Sciatic nerve (tissue), 2 donors: ENCODE measurements at regions of chr11 and their contacts with region 1.

Region 1: GRCh38 chr11:108241330-108242037 is 18.6 kb downstream of the ATM start:
- DNase-seq: no peak
- ATAC-seq: no peak

Region 2: GRCh38 chr11:109251230-109251629 is 1009.7 kb after region 1 on chr11:
- intact Hi-C with region 1: loop called (anchors 5 kb)
- DNase-seq: no peak
- ATAC-seq: no peak